Transverse colon (tissue), 4 donors: ENCODE measurements at regions of chr20 and their contacts with region 1.

Region 1: DNA sequence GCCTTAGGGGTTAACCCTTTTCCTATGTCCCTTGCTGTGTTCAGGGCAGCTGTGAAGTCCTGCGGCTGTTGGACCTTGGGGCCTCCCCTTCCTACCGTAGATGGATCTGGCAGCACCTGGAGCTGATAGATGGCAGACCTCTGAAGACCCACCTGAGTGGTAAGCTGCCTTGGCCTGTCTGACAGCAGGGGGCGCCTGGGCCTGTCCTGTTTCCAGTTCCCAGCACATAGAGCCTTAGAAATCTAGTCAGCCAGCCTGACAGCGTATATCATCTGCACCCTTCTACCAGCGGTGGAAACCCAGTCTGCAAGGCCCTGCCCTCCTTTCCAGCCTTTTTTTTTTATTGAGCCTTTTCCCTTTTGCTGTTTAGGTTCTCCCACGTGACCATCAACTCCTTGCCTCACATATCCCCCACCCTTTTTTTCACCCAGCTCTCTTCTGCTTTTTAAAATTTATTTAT is 26.6 kb downstream of the CNBD2 start:
- DNase-seq: peak; percentile 90
- H3K4me3 ChIP-seq: no peak overlapping the region
- H3K27ac ChIP-seq: no peak overlapping the region
- H3K4me1 ChIP-seq: peaks cover 0 to 10% (median 4%) of the 10 kb centered on the region in 4 donors
- H3K27me3 ChIP-seq: no peaks in the 10 kb centered on the region
- CTCF ChIP-seq: peak; percentile 83 to 88 (median 87)
- EP300 ChIP-seq: no peak
- POLR2A ChIP-seq: no peak

Region 2: DNA sequence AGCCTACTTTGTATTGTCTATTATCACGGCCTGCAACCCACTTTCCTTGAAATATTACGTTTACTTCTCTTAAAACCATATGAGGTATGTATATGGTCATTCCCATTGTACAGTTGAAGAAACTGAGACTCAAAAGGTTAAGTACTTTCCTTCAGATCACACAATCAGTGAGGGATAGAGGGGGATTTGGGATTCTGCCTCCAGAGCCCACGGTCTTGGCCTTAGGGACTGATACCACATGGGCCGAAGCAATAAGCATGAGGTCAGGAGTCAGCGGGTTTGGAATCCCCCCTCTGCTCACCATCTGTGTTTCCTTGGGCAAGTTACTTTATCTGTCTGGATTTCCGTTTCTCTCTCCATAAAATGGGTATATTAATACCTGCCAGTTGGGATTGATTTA is 140.1 kb after region 1 on chr20:
- in situ Hi-C with region 1: loop called (anchors 5 kb)
- intact Hi-C with region 1: loop called (anchors 2 kb)
- DNase-seq: no peak
- H3K4me3 ChIP-seq: no peak overlapping the region
- H3K27ac ChIP-seq: no peak overlapping the region
- H3K4me1 ChIP-seq: peaks cover 0 to 9% (median 6%) of the 10 kb centered on the region in 4 donors
- H3K27me3 ChIP-seq: no peaks in the 10 kb centered on the region
- CTCF ChIP-seq: no peak
- EP300 ChIP-seq: no peak
- POLR2A ChIP-seq: no peak

Region 3: GRCh38 chr20:36439040-36439730 is 444.2 kb after region 1 on chr20:
- in situ Hi-C with region 1: loop called in 3 of 4 experiments (anchors 25 kb)
- intact Hi-C with region 1: no loop called
- DNase-seq: peak; percentile 69
- H3K4me3 ChIP-seq: no peak overlapping the region
- H3K27ac ChIP-seq: no peak overlapping the region
- H3K4me1 ChIP-seq: peaks cover 0 to 4% (median 4%) of the 10 kb centered on the region in 4 donors
- H3K27me3 ChIP-seq: no peaks in the 10 kb centered on the region
- CTCF ChIP-seq: peak; percentile 78 to 87 (median 83)
- EP300 ChIP-seq: no peak
- POLR2A ChIP-seq: no peak